Ascending aorta (tissue), 2 donors: ENCODE measurements at regions of chr5 and their contacts with region 1.

Region 1: DNA sequence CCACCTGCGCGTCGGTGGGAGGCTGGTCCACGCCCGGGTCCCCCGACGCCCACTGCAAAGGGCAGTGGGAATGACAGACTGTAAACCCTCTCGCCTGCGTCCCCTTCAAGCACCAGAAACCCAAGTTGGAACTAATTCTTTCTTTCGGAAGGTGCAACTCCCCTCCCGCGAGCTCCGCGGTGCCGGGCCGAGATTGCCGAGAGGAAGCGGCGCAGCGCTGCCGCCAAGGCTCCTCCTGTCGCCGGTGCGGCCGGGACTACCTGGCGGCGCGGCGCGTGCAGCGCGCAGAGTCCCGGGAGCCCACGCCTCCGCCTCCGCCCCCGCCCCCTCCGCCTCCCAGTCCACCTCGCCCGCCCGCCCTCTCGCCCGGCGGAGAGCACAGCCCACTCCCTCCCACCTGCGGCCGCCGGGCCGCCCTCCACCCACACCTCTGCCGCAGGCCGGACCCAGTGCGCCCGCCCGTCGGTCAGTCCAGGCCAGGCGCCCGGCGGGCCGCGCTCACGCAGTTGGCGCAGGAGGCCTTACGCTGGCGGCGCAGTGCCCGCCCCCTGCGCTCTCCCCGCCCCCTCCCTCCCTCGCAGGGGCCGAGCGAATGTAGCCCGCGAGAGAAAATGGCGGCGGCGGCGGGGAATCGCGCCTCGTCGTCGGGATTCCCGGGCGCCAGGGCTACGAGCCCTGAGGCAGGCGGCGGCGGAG is at the start of gene MAP3K1:
- DNase-seq: peak in 1 of 2 donors; percentile 85
- H3K4me3 ChIP-seq: peak within 1 kb of the TSS; percentile 91 to 97
- H3K27ac ChIP-seq: peak within 1 kb of the TSS; percentile 55 to 87
- H3K4me1 ChIP-seq: peaks cover 0 to 21% of the 10 kb centered on the region in 2 donors
- H3K27me3 ChIP-seq: no peaks in the 10 kb centered on the region
- CTCF ChIP-seq: peak in 1 of 3 experiments; percentile 16
- total RNA-seq, gene MAP3K1: 14.7 TPM

Region 2: GRCh38 chr5:55172051-55172899 is 1642.8 kb before region 1 on chr5:
- intact Hi-C with region 1: loop called (anchors 10 kb)
- DNase-seq: peak in 1 of 2 donors; percentile 78
- H3K4me3 ChIP-seq: peak overlapping the region; percentile 57 to 64
- H3K27ac ChIP-seq: no peak overlapping the region
- H3K4me1 ChIP-seq: peaks cover 0 to 8% of the 10 kb centered on the region in 2 donors
- H3K27me3 ChIP-seq: peaks cover 6% of the 10 kb centered on the region
- CTCF ChIP-seq: peak; percentile 47 to 80 (median 65)

Region 3: GRCh38 chr5:55994574-55995333 is 820.4 kb before region 1 on chr5 and contains the start of gene IL6ST:
- intact Hi-C with region 1: loop called (anchors 2 kb)
- DNase-seq: peak; percentile 85 to 98
- H3K4me3 ChIP-seq: peak within 1 kb of the TSS; percentile 95 to 98
- H3K27ac ChIP-seq: peak within 1 kb of the TSS; percentile 99 to 100
- H3K4me1 ChIP-seq: peaks cover 0 to 11% of the 10 kb centered on the region in 2 donors
- H3K27me3 ChIP-seq: no peaks in the 10 kb centered on the region
- CTCF ChIP-seq: peak in 1 of 3 experiments; percentile 6
- total RNA-seq, gene IL6ST: 192 TPM

Region 4: GRCh38 chr5:56481428-56482357 is 333.4 kb before region 1 on chr5:
- intact Hi-C with region 1: loop called (anchors 2 kb)
- DNase-seq: no peak
- H3K4me3 ChIP-seq: peak overlapping the region; percentile 77 to 89
- H3K27ac ChIP-seq: peak overlapping the region; percentile 90 to 97
- H3K4me1 ChIP-seq: peaks cover 5 to 21% of the 10 kb centered on the region in 2 donors
- H3K27me3 ChIP-seq: no peaks in the 10 kb centered on the region
- CTCF ChIP-seq: peak in 2 of 3 experiments; percentile 13 to 23

Region 5: GRCh38 chr5:56783261-56783660 is 31.9 kb before region 1 on chr5:
- intact Hi-C with region 1: no loop called
- DNase-seq: no peak
- H3K4me3 ChIP-seq: no peak overlapping the region
- H3K27ac ChIP-seq: no peak overlapping the region
- H3K4me1 ChIP-seq: no peaks in the 10 kb centered on the region
- H3K27me3 ChIP-seq: no peaks in the 10 kb centered on the region
- CTCF ChIP-seq: no peak

Region 6: GRCh38 chr5:56852228-56853000 is 37.3 kb after region 1 on chr5:
- intact Hi-C with region 1: no loop called
- DNase-seq: no peak
- H3K4me3 ChIP-seq: no peak overlapping the region
- H3K27ac ChIP-seq: no peak overlapping the region
- H3K4me1 ChIP-seq: peaks cover 4 to 28% of the 10 kb centered on the region in 2 donors
- H3K27me3 ChIP-seq: no peaks in the 10 kb centered on the region
- CTCF ChIP-seq: no peak

Region 7: DNA sequence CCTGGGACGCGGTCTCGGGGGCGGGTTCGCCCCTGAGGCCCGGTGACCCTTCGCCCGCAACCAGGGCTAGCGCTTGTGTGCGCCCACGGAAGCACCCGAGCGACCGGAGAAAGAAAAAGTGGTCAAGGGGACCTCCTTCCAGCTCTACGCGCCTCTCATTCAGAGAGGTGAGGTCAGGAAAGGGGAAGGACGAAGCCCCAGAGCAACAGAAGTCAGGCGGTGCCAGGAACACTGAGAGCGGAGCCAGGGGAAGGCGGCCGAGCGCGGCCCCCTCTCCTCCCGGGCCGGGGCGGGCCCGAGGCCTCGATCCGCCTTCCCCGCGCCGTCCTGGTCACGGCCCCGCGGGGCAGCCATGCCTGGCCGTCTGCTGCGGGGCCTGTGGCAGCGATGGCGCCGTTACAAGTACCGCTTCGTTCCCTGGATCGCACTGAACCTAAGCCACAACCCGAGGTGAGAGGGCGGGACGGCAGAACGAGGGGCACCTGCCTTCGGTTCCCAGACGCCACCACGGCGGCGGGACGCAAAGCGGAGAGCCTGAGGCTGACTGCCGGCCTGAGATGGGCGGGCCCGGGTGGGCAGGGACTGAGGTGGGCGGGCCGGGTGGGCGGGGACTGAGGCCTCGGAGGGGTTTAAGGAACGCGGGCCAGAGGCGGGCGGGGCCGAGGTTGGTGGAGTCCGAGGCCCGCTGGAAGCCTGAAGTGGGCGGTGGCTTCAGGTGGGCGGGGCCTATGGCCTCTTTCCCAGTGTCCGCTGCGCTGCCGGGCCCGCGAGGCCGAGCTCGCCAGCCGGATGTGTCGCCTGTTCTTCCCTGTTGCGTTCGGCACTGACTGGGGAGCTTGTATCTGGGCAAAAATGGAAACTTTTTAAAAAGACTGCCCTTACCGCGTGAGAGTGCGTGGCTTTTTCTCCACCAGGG is 94.4 kb after region 1 on chr5 and contains the start of gene SETD9:
- intact Hi-C with region 1: loop called (anchors 2 kb)
- DNase-seq: peak; percentile 90 to 99
- H3K4me3 ChIP-seq: peak within 1 kb of the TSS; percentile 63 to 92
- H3K27ac ChIP-seq: peak within 1 kb of the TSS; percentile 90 to 99
- H3K4me1 ChIP-seq: peaks cover 2 to 6% of the 10 kb centered on the region in 2 donors
- H3K27me3 ChIP-seq: no peaks in the 10 kb centered on the region
- CTCF ChIP-seq: no peak
- total RNA-seq, gene SETD9: 16.8 TPM

Region 8: DNA sequence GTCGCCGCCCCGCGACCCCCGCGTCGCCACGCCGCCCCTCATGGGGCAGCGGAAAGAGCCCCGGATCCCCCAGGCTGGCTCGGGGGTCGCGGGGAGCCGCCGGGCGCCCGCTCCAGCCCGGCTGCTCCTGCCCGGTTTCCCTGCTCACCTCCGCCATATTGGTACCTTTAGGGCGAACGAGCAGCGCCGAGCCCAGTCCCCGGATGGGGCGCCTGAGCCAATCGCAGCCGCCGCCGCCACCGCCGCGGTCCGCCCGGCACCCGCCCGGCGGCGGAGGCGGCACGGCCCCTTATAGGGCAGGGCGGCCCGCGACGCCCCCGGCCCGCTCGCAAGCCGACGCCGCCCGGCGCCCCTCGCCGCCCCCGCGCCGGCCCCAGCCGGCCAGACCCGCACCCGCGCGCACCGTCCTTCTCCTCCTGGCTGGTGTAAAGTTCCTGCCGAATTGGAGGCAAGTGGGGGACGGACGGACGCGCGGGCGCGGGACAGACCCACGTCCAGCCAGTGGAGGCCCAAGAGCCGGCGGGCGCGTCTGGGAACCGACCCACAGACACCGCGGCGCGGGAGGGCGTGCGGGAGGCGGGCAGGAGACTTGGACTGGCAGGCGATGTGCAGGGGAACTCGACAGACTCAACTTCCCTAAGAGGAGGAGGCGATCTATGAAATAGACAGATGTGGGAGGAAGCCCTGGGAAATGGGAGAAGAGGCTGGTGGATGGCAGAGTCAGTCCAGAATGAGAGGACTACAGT is 137.0 kb after region 1 on chr5 and contains the start of gene MIER3:
- intact Hi-C with region 1: loop called (anchors 5 kb)
- DNase-seq: peak; percentile 12 to 87
- H3K4me3 ChIP-seq: peak within 1 kb of the TSS; percentile 82 to 98
- H3K27ac ChIP-seq: peak within 1 kb of the TSS; percentile 87 to 92
- H3K4me1 ChIP-seq: peaks cover 0 to 2% of the 10 kb centered on the region in 2 donors
- H3K27me3 ChIP-seq: no peaks in the 10 kb centered on the region
- CTCF ChIP-seq: no peak
- total RNA-seq, gene MIER3: 5.5 TPM